CD8-positive, alpha-beta T cell (primary cell): ENCODE measurements at regions of chr9 and their contacts with region 1.

Region 1: DNA sequence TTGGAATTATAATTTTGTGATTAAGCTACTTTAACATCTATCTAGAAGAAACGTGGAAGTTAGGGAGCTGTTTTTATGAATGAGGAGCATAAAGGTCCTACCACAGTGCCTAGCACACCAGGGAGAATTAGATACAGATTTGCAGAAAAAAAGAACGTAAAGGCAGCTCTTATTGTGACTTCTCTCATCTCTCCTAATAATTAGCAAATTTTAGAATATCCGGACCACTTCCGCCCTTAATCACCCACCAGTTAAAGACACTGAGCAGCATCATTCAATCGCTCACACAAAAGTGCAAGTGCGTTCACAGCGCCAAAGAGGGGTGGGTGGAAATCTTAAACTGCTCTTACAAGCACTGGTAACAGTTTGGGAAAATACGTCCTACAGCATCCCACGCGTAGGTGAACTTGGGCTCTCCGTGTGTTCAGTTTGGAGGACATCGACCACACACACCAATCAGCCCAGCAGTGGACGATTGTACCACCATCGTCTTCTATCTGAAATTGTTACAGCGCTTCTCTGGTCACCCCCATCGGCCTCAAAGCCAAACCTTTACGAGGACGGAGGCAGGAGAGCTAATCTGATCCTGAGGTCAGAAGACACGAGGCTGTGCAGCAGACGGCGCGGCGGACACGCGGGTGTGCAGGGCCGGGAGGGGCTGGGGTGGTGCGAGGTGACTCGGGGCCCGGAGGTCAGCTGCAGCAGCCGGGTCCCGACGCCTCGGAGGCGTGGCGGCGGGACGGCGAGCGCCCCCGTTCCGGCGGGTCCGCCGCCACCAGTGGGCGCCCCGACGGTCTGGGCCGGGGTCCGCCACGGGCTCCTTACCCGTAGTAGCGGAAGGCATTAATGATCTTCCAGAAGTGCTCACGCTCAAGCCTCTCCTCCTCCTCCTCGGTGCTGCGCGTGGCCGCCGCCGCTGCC is 646 bp downstream of the CARNMT1 start:
- DNase-seq: peak in 8 of 9 experiments; percentile 20 to 69 (median 36)
- ATAC-seq: no peak
- H3K4me3 ChIP-seq: peak overlapping the region; percentile 60 to 72
- H3K4me3 Mint-ChIP-seq: peak overlapping the region; percentile 98
- H3K27ac ChIP-seq: peak overlapping the region; percentile 63 to 73
- H3K27ac Mint-ChIP-seq: peak overlapping the region; percentile 97
- H3K4me1 ChIP-seq: peaks cover 32% of the 10 kb centered on the region
- H3K4me1 Mint-ChIP-seq: peaks cover 49% of the 10 kb centered on the region
- H3K27me3 ChIP-seq: no peaks in the 10 kb centered on the region
- H3K27me3 Mint-ChIP-seq: no peaks in the 10 kb centered on the region
- CTCF ChIP-seq: no peak

Region 2: GRCh38 chr9:74773886-74774479 is 253.5 kb before region 1 on chr9:
- CTCF ChIA-PET with region 1: interaction called, 33 read pairs
- POLR2A ChIA-PET with region 1: no interaction called
- intact Hi-C with region 1: no loop called
- DNase-seq: peak; percentile 32 to 78 (median 70)
- ATAC-seq: peak; percentile 77
- H3K4me3 ChIP-seq: no peak overlapping the region
- H3K4me3 Mint-ChIP-seq: no peak overlapping the region
- H3K27ac ChIP-seq: no peak overlapping the region
- H3K27ac Mint-ChIP-seq: no peak overlapping the region
- H3K4me1 ChIP-seq: no peaks in the 10 kb centered on the region
- H3K4me1 Mint-ChIP-seq: no peaks in the 10 kb centered on the region
- H3K27me3 ChIP-seq: no peaks in the 10 kb centered on the region
- H3K27me3 Mint-ChIP-seq: peaks cover 20% of the 10 kb centered on the region
- CTCF ChIP-seq: peak; percentile 93

Region 3: DNA sequence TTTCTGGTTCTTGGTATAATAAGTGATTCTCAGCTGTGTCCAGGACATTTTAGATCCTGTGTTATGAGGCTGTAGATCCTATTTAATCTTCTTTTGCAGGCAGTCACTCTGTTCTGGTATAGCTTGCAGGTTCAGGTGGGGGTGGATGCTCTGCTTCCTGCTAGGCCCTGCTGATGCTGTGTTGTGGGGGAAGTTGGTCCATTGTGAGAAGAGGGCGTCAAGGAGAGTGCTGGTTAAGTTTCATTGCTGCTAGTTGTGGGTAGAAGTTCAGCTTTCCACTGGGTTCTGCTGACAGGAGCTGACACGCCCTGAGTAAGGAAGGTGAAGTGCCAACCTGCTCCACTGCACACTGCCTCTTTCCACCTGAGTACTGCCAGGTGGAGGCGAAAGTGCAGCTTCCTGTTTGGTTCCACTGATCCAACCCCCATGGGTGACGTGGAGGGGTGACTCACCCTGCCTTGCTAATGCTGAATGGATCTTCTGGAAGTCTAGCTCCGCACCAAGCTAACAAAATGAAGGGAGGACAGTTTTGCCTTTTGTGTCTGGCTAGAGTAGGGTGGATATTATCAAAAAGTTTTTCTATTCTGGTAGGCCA is 44.2 kb after region 1 on chr9:
- CTCF ChIA-PET with region 1: interaction called, 9 read pairs
- POLR2A ChIA-PET with region 1: interaction called, 14 read pairs
- intact Hi-C with region 1: loop called (anchors 2 kb)
- DNase-seq: peak in 6 of 9 experiments; percentile 44 to 75 (median 58)
- ATAC-seq: peak; percentile 97
- H3K4me3 ChIP-seq: no peak overlapping the region
- H3K4me3 Mint-ChIP-seq: no peak overlapping the region
- H3K27ac ChIP-seq: no peak overlapping the region
- H3K27ac Mint-ChIP-seq: peak overlapping the region; percentile 85
- H3K4me1 ChIP-seq: peaks cover 7% of the 10 kb centered on the region
- H3K4me1 Mint-ChIP-seq: peaks cover 17% of the 10 kb centered on the region
- H3K27me3 ChIP-seq: no peaks in the 10 kb centered on the region
- H3K27me3 Mint-ChIP-seq: no peaks in the 10 kb centered on the region
- CTCF ChIP-seq: no peak

Region 4: GRCh38 chr9:75108555-75108954 is 81.1 kb after region 1 on chr9:
- CTCF ChIA-PET with region 1: no interaction called
- POLR2A ChIA-PET with region 1: no interaction called
- intact Hi-C with region 1: no loop called
- DNase-seq: peak in 2 of 9 experiments; percentile 45 to 53
- ATAC-seq: no peak
- H3K4me3 ChIP-seq: no peak overlapping the region
- H3K4me3 Mint-ChIP-seq: no peak overlapping the region
- H3K27ac ChIP-seq: no peak overlapping the region
- H3K27ac Mint-ChIP-seq: peak overlapping the region; percentile 68
- H3K4me1 ChIP-seq: peaks cover 36% of the 10 kb centered on the region
- H3K4me1 Mint-ChIP-seq: peaks cover 72% of the 10 kb centered on the region
- H3K27me3 ChIP-seq: no peaks in the 10 kb centered on the region
- H3K27me3 Mint-ChIP-seq: no peaks in the 10 kb centered on the region
- CTCF ChIP-seq: no peak

Region 5: DNA sequence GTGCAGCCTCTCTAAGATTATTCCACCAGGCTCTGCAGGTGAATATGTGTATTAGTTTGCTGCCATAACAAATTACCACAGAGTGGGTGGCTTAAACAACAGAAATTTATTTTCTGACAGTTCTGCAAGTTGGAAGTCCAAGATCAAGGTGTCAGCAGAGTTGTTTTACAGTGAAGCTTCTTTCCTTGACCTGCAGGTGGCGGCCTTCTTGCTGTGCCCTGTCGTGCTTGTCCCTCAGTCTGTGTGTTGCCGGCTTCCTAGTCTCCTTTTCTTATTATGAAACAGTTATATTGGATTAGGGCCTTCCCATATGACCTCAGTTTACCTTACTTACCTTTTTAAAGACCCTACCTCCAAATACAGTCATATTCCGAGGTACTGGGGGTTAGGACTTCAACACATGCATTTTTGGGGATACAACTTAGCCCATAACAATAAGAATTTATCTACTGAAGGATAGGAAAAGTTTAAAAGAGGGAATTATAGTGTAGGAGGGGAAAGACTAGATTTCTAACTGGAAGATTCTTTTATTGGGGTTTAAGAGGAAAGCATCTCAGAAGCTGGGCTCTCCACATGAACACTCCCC is 158.2 kb after region 1 on chr9:
- CTCF ChIA-PET with region 1: interaction called, 4 read pairs
- POLR2A ChIA-PET with region 1: interaction called, 3 read pairs
- intact Hi-C with region 1: loop called in 1 of 2 experiments (anchors 10 kb)
- DNase-seq: peak; percentile 3 to 63 (median 44)
- ATAC-seq: peak; percentile 66
- H3K4me3 ChIP-seq: no peak overlapping the region
- H3K4me3 Mint-ChIP-seq: no peak overlapping the region
- H3K27ac ChIP-seq: no peak overlapping the region
- H3K27ac Mint-ChIP-seq: no peak overlapping the region
- H3K4me1 ChIP-seq: peaks cover 10% of the 10 kb centered on the region
- H3K4me1 Mint-ChIP-seq: peaks cover 19% of the 10 kb centered on the region
- H3K27me3 ChIP-seq: no peaks in the 10 kb centered on the region
- H3K27me3 Mint-ChIP-seq: no peaks in the 10 kb centered on the region
- CTCF ChIP-seq: peak; percentile 69

Region 6: DNA sequence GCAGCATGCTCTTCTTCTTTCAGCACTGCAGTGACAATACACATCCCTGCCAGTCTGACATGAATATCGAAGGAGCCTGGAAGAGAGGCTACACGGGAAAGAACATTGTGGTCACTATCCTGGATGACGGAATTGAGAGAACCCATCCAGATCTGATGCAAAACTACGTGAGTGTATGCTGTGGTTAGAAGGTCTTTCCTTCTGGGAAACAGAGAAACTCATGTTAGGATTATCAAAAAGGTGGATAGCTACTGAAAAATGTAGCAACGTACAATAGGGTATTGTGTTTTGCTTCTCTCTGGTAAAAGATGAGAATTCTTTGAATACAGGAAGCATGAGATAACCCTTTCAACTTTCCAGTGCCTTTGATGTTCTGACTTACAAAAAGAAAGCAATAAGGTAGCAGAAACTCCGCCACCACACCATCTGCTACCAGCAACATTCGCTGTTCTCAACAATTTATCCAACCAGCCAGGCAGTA is 996.3 kb after region 1 on chr9:
- CTCF ChIA-PET with region 1: no interaction called
- POLR2A ChIA-PET with region 1: no interaction called
- intact Hi-C with region 1: loop called in 1 of 2 experiments (anchors 5 kb)
- DNase-seq: peak in 8 of 9 experiments; percentile 1 to 82 (median 40)
- ATAC-seq: peak; percentile 84
- H3K4me3 ChIP-seq: peak overlapping the region; percentile 3 to 32
- H3K4me3 Mint-ChIP-seq: peak overlapping the region; percentile 80
- H3K27ac ChIP-seq: peak overlapping the region; percentile 26 to 54
- H3K27ac Mint-ChIP-seq: peak overlapping the region; percentile 95
- H3K4me1 ChIP-seq: peaks cover 93% of the 10 kb centered on the region
- H3K4me1 Mint-ChIP-seq: peaks cover 92% of the 10 kb centered on the region
- H3K27me3 ChIP-seq: no peaks in the 10 kb centered on the region
- H3K27me3 Mint-ChIP-seq: no peaks in the 10 kb centered on the region
- CTCF ChIP-seq: no peak